Esophagus squamous epithelium (tissue), 5 donors: ENCODE measurements at regions of chr11 and their contacts with region 1.

Region 1: DNA sequence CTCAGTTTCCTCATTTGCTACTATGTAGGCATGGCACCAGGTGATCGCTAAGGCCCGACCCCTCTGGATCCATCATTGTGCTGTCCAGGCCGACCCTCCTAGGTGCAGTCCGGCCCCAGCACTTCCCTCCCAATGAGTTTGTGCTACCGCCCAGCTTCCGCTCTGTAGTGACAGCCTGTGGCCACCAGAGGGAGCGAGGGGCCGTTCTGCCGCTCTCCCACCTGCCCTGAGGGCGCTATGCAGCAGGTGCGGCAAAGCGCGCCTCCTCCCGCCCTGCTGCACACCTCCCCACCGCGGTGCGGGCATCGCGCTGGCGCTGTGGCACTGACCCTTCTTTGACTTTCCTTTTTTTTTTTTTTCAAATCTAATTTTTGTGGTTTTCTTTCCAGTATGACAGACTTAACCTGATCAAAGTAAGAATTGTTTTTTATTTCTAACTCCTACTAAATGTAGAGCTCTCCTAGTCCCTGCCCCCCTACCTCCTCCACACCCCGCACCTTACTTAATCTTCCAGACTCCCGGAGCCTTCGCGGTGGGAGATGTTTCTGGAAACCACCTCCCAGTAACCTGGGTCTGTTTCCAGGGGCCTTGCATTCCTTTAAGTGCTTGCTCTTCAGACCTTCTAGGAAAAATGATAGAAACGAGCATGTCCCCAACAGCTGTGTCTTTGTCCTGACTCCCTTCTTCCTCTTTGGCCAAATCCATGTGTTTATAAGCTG is 73.7 kb downstream of the SCN3B start:
- DNase-seq: no peak
- H3K4me3 ChIP-seq: no peak overlapping the region
- H3K27ac ChIP-seq: no peak overlapping the region
- H3K4me1 ChIP-seq: peaks cover 0 to 14% (median 5%) of the 10 kb centered on the region in 3 donors
- H3K27me3 ChIP-seq: peaks cover 0 to 45% (median 0%) of the 10 kb centered on the region in 4 donors
- CTCF ChIP-seq: peak; percentile 70 to 95 (median 90)
- POLR2A ChIP-seq: no peak

Region 2: GRCh38 chr11:123628936-123629683 is 48.4 kb after region 1 on chr11:
- intact Hi-C with region 1: no loop called
- DNase-seq: no peak
- H3K4me3 ChIP-seq: no peak overlapping the region
- H3K27ac ChIP-seq: no peak overlapping the region
- H3K4me1 ChIP-seq: no peaks in the 10 kb centered on the region
- H3K27me3 ChIP-seq: no peaks in the 10 kb centered on the region
- CTCF ChIP-seq: no peak
- POLR2A ChIP-seq: no peak

Region 3: DNA sequence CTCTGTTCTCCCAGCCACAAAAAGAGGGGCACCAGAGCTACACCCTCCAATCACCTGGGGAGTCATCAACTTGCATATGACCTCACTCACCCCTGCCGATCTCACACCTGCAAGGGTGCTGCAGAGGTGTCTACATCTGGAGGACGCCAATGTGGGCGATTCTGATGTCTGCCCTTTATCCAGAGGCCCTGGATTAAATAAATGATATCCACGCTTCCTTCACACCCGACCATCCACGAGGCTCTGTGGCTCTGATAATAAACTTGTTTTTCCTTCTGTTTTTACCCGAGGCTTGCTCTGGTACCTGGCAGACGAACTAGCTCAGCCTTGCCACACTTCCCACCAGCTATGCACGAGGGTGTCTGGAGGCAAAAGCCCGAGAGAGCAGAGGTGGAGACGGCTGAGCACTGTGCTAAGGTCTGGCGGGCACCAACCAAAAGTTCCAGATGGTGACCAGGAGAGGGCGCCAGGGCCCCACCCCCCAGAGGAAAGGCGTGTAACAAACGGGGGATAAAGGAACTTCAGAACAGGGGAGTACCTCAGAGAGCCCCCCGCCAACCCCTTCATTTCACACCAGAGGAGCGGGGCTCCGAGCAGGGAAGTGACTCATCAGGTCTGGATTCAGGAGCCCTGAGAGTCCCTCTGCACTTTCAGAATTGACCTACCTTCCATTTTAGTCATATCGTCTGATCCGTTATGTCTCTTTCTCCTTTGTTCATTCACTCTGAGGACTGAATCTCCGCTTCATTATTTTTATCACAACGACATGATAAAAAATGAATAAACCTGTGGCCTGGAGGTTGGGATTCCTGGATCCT is 60.2 kb after region 1 on chr11:
- intact Hi-C with region 1: loop called (anchors 5 kb)
- DNase-seq: no peak
- H3K4me3 ChIP-seq: no peak overlapping the region
- H3K27ac ChIP-seq: no peak overlapping the region
- H3K4me1 ChIP-seq: no peaks in the 10 kb centered on the region
- H3K27me3 ChIP-seq: peaks cover 0 to 24% (median 0%) of the 10 kb centered on the region in 4 donors
- CTCF ChIP-seq: peak in 5 of 6 experiments; percentile 45 to 70 (median 55)
- POLR2A ChIP-seq: no peak

Region 4: DNA sequence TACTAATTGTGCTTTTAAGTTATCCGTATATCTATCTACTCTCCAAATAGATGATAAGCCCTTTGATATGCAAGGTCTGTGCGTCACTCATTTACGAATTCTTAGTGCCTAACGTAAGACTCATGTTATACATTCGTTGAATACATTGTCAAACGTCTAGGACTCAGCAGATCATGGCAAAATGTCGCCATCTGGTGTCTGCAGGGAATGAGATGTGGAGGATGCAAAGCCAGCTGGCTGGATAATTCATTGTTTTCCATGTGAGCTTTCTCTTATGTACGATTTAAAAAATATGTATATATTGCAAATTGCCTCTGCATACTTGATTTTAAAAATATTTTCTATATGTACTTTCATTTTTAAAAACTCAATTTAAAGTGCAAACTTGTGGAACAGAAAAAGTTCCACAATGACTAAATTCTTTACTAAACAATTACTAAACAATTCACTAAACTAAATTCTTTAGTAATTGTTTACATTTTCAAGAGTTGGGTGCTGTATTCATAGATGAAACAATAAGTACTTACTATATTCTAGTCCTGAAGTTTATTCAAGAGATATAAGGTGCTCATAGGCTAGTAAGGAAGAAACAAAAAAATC is 127.0 kb after region 1 on chr11:
- intact Hi-C with region 1: loop called (anchors 5 kb)
- DNase-seq: no peak
- H3K4me3 ChIP-seq: no peak overlapping the region
- H3K27ac ChIP-seq: no peak overlapping the region
- H3K4me1 ChIP-seq: no peaks in the 10 kb centered on the region
- H3K27me3 ChIP-seq: peaks cover 0 to 4% (median 0%) of the 10 kb centered on the region in 4 donors
- CTCF ChIP-seq: peak in 5 of 6 experiments; percentile 50 to 73 (median 56)
- POLR2A ChIP-seq: no peak